ENCODE measurements at regions of chr17 and their contacts with region 1.

Region 1: DNA sequence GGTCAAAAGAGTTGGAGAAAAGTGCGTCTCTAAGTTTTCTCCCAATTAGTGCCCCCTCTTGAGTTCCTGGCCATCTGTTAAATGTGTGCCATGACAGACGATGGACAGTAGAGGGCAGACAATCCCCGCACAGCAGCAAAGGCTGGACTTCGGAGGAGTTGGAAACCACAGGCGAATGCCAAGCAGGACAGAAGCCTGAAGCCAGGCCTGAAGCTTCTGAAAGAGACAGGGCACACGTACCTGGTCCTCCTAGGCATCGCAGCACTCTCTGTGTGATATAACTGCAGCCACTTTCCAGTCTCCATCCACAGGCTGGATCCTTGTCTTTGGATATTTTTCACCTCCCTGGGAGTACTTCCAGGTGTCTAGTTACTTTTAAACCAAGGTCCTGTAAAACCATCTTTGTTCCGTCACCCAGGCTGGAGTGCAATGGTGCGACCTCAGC is 14.5 kb downstream of the C17orf100 start:
- DNase-seq: peak; percentile 77
- ATAC-seq: peak; percentile 98
- H3K4me3 ChIP-seq: no peak overlapping the region
- H3K27ac ChIP-seq: no peak overlapping the region
- H3K4me1 ChIP-seq: peaks cover 4% of the 10 kb centered on the region
- H3K27me3 ChIP-seq: no peaks in the 10 kb centered on the region
- CTCF ChIP-seq: peak; percentile 89

Region 2: GRCh38 chr17:6623941-6624340 is 42.2 kb before region 1 on chr17:
- intact Hi-C with region 1: no loop called
- DNase-seq: no peak
- ATAC-seq: no peak
- H3K4me3 ChIP-seq: no peak overlapping the region
- H3K27ac ChIP-seq: no peak overlapping the region
- H3K4me1 ChIP-seq: no peaks in the 10 kb centered on the region
- H3K27me3 ChIP-seq: no peaks in the 10 kb centered on the region
- CTCF ChIP-seq: no peak

Region 3: GRCh38 chr17:6721744-6722143 is 55.6 kb after region 1 on chr17:
- intact Hi-C with region 1: loop called (anchors 10 kb)
- DNase-seq: no peak
- ATAC-seq: no peak
- H3K4me3 ChIP-seq: no peak overlapping the region
- H3K27ac ChIP-seq: no peak overlapping the region
- H3K4me1 ChIP-seq: no peaks in the 10 kb centered on the region
- H3K27me3 ChIP-seq: no peaks in the 10 kb centered on the region
- CTCF ChIP-seq: no peak

Region 4: DNA sequence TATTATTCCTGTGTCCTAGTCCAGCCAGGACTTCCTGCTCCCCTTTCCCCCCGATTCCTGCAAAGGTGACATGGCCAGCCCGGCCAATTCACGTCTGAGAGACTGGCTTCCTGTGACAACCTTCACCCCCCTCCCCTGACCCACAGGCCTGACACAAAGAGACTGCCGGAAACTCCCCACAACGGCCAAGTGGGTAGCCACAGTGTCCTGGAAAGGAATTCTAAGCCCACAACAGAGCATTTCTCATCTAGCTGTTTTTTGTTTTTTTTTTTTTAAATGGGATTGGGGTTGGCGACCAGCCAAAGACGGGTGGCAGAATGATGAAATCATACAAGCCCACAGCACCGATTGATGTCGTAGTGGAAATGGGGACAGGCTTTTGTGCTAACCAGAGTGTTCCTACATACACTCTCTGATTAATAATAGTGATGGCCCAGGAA is 86.9 kb after region 1 on chr17:
- intact Hi-C with region 1: no loop called
- DNase-seq: no peak
- ATAC-seq: peak; percentile 49
- H3K4me3 ChIP-seq: no peak overlapping the region
- H3K27ac ChIP-seq: peak overlapping the region; percentile 83
- H3K4me1 ChIP-seq: peaks cover 46% of the 10 kb centered on the region
- H3K27me3 ChIP-seq: no peaks in the 10 kb centered on the region
- CTCF ChIP-seq: no peak